Activated CD4-positive, alpha-beta T cell treated with anti-CD3 and anti-CD28 coated beads for 36 hours (primary cell): ENCODE measurements at regions of chrX and their contacts with region 1.

Region 1: GRCh38 chrX:57821703-57822375 is 88.4 kb downstream of the ZXDA start:
- DNase-seq: peak; percentile 31
- ATAC-seq: peak; percentile 68
- H3K4me3 Mint-ChIP-seq: no peak overlapping the region
- H3K27ac Mint-ChIP-seq: no peak overlapping the region
- H3K4me1 Mint-ChIP-seq: peaks cover 2% of the 10 kb centered on the region
- H3K27me3 Mint-ChIP-seq: no peaks in the 10 kb centered on the region

Region 2: GRCh38 chrX:56588397-56589188 is 1233.2 kb before region 1 on chrX:
- CTCF ChIA-PET with region 1: no interaction called
- POLR2A ChIA-PET with region 1: no interaction called
- intact Hi-C with region 1: no loop called
- DNase-seq: no peak
- ATAC-seq: no peak
- H3K4me3 Mint-ChIP-seq: no peak overlapping the region
- H3K27ac Mint-ChIP-seq: no peak overlapping the region
- H3K4me1 Mint-ChIP-seq: peaks cover 2% of the 10 kb centered on the region
- H3K27me3 Mint-ChIP-seq: no peaks in the 10 kb centered on the region

Region 3: DNA sequence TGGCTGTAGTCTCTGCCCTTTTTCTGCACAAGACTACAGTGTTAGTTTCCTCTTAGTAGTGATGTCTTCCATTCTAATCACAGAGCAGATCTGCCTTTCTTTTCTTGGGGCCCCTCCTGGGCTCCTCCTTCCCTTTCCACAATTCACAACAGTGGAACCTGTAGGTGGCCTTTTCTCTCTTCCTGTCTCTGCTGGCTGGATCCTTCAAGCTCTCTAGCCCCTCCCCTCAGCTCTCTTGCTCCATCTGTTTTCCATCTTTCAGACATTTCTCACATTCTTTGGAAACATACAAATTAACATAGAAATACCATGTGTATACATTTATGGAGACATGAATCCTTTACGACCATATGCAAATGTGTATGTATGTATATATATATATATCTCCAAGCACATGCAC is 684.3 kb before region 1 on chrX:
- CTCF ChIA-PET with region 1: no interaction called
- POLR2A ChIA-PET with region 1: no interaction called
- intact Hi-C with region 1: no loop called
- DNase-seq: no peak
- ATAC-seq: no peak
- H3K4me3 Mint-ChIP-seq: no peak overlapping the region
- H3K27ac Mint-ChIP-seq: no peak overlapping the region
- H3K4me1 Mint-ChIP-seq: peaks cover 8% of the 10 kb centered on the region
- H3K27me3 Mint-ChIP-seq: no peaks in the 10 kb centered on the region

Region 4: DNA sequence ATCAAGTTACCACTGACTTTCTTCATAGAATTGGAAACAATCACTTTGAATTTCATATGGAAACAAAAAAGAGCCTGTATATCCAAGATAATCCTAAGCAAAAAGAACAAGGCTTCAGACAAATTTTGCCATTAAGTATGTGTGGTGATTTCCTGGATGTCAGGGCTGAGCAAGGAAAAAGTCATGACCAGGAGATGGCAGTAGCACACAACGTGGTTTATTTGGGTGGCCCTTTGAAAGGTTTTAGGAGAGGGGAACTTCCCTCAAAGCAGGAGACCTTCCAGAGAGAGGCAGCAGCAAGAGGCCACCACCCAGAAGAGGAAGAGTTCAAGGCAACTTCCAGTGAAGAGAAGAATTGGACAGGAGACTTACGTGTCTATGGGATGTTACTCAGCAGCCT is 248.1 kb before region 1 on chrX:
- CTCF ChIA-PET with region 1: no interaction called
- POLR2A ChIA-PET with region 1: no interaction called
- intact Hi-C with region 1: loop called in 1 of 2 experiments (anchors 5 kb)
- DNase-seq: peak; percentile 29
- ATAC-seq: peak; percentile 47
- H3K4me3 Mint-ChIP-seq: no peak overlapping the region
- H3K27ac Mint-ChIP-seq: no peak overlapping the region
- H3K4me1 Mint-ChIP-seq: peaks cover 2% of the 10 kb centered on the region
- H3K27me3 Mint-ChIP-seq: no peaks in the 10 kb centered on the region

Region 5: GRCh38 chrX:57772637-57773036 is 49.2 kb before region 1 on chrX:
- CTCF ChIA-PET with region 1: no interaction called
- POLR2A ChIA-PET with region 1: no interaction called
- intact Hi-C with region 1: loop called in 1 of 2 experiments (anchors 10 kb)
- DNase-seq: no peak
- ATAC-seq: no peak
- H3K4me3 Mint-ChIP-seq: no peak overlapping the region
- H3K27ac Mint-ChIP-seq: no peak overlapping the region
- H3K4me1 Mint-ChIP-seq: no peaks in the 10 kb centered on the region
- H3K27me3 Mint-ChIP-seq: no peaks in the 10 kb centered on the region

Region 6: GRCh38 chrX:57848857-57849256 is 27.0 kb after region 1 on chrX:
- CTCF ChIA-PET with region 1: no interaction called
- POLR2A ChIA-PET with region 1: no interaction called
- intact Hi-C with region 1: no loop called
- DNase-seq: no peak
- ATAC-seq: no peak
- H3K4me3 Mint-ChIP-seq: no peak overlapping the region
- H3K27ac Mint-ChIP-seq: no peak overlapping the region
- H3K4me1 Mint-ChIP-seq: no peaks in the 10 kb centered on the region
- H3K27me3 Mint-ChIP-seq: no peaks in the 10 kb centered on the region

Region 7: DNA sequence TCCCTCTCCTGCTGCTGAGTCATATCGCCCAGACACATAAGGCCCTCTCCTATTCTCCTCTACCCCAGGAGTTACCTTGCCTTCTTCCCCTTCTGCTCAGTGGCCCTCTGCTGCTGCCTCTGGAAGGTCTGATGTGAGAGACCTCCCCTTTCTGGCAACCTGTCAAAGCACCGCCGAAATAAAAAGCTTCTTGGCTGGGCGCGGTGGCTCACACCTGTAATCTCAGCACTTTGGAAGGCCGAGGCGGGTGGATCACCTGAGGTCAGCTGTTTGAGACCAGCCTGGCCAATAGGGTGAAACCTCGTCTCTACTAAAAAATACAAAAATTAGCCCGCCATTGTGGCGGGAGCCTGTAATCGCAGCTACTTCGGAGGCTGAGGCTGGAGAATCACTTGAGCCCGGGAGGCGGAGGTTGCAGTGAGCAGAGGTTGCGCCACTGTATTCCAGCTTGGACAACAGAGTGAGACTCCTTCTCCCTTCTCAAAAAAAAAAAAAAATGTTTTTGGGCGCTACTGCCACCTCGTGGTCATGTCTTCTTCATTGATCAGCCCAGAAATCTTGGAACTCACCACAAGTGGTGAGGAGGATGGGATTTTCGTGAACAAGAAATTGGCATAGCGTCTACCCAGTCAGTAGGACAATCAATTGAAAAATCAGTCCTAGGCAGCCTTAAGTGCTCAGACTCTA is 97.1 kb after region 1 on chrX:
- CTCF ChIA-PET with region 1: interaction called, 3 read pairs
- POLR2A ChIA-PET with region 1: no interaction called
- intact Hi-C with region 1: loop called (anchors 1 kb)
- DNase-seq: peak; percentile 34
- ATAC-seq: peak; percentile 39
- H3K4me3 Mint-ChIP-seq: no peak overlapping the region
- H3K27ac Mint-ChIP-seq: no peak overlapping the region
- H3K4me1 Mint-ChIP-seq: no peaks in the 10 kb centered on the region
- H3K27me3 Mint-ChIP-seq: no peaks in the 10 kb centered on the region

Region 8: DNA sequence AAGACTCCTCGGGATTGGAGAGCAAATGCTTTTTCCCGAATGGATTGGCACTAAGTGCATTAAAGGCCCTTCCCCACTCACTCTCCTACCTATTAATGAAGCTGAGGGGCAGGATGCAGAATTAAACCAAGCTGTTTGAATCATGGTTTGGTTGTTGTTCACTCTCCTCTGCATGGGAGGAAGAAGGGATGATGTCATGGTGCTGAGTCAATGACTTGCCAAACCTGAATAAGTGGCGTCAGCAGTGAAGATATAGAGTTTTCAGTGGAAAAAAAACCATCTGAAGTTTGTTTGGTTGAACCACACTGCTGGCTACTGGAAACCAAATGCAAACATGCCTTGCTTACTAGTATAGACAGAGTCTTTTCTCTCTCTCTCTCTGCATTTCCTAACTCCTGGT is 108.2 kb after region 1 on chrX:
- CTCF ChIA-PET with region 1: interaction called, 3 read pairs
- POLR2A ChIA-PET with region 1: no interaction called
- intact Hi-C with region 1: loop called in 1 of 2 experiments (anchors 2 kb)
- DNase-seq: no peak
- ATAC-seq: peak; percentile 69
- H3K4me3 Mint-ChIP-seq: no peak overlapping the region
- H3K27ac Mint-ChIP-seq: no peak overlapping the region
- H3K4me1 Mint-ChIP-seq: peaks cover 4% of the 10 kb centered on the region
- H3K27me3 Mint-ChIP-seq: no peaks in the 10 kb centered on the region

Region 9: GRCh38 chrX:58025979-58026378 is 204.1 kb after region 1 on chrX:
- CTCF ChIA-PET with region 1: interaction called, 21 read pairs
- POLR2A ChIA-PET with region 1: no interaction called
- intact Hi-C with region 1: loop called (anchors 1 to 2 kb)
- DNase-seq: peak; percentile 37
- ATAC-seq: no peak
- H3K4me3 Mint-ChIP-seq: no peak overlapping the region
- H3K27ac Mint-ChIP-seq: no peak overlapping the region
- H3K4me1 Mint-ChIP-seq: peaks cover 8% of the 10 kb centered on the region
- H3K27me3 Mint-ChIP-seq: no peaks in the 10 kb centered on the region